Transverse colon (tissue), 4 donors: ENCODE measurements at regions of chr7 and their contacts with region 1.

Region 1: GRCh38 chr7:2354186-2354938 is at the start of gene EIF3B:
- DNase-seq: peak; percentile 91
- H3K4me3 ChIP-seq: peak within 1 kb of the TSS; percentile 87 to 100 (median 98)
- H3K27ac ChIP-seq: peak within 1 kb of the TSS; percentile 96 to 98 (median 96)
- H3K4me1 ChIP-seq: peaks cover 19 to 44% (median 32%) of the 10 kb centered on the region in 4 donors
- H3K27me3 ChIP-seq: no peaks in the 10 kb centered on the region
- CTCF ChIP-seq: peak in 2 of 5 experiments; percentile 5 to 15
- EP300 ChIP-seq: no peak
- POLR2A ChIP-seq: peak; percentile 28
- total RNA-seq, gene EIF3B: 75.4 to 201 (median 90.6) TPM

Region 2: GRCh38 chr7:2232766-2233520 is 121.4 kb before region 1 on chr7 and contains the start of gene MAD1L1:
- in situ Hi-C with region 1: loop called in 2 of 4 experiments (anchors 25 kb)
- intact Hi-C with region 1: no loop called
- DNase-seq: peak; percentile 93
- H3K4me3 ChIP-seq: peak within 1 kb of the TSS; percentile 88 to 99 (median 97)
- H3K27ac ChIP-seq: peak within 1 kb of the TSS; percentile 74 to 85 (median 78)
- H3K4me1 ChIP-seq: peaks cover 10 to 21% (median 20%) of the 10 kb centered on the region in 4 donors
- H3K27me3 ChIP-seq: no peaks in the 10 kb centered on the region
- CTCF ChIP-seq: no peak
- EP300 ChIP-seq: no peak
- POLR2A ChIP-seq: peak; percentile 31
- total RNA-seq, gene MAD1L1: 8.0 to 52.7 (median 26.7) TPM

Region 3: GRCh38 chr7:2241580-2242540 is 112.5 kb before region 1 on chr7 and contains the starts of genes MRM2 and NUDT1:
- in situ Hi-C with region 1: loop called in 3 of 4 experiments (anchors 10 to 25 kb)
- intact Hi-C with region 1: loop called (anchors 10 kb)
- DNase-seq: peak; percentile 87
- H3K4me3 ChIP-seq: peak within 1 kb of the TSS; percentile 50 to 100 (median 92)
- H3K27ac ChIP-seq: peak within 1 kb of the TSS; percentile 75 to 85 (median 82)
- H3K4me1 ChIP-seq: peaks cover 17 to 28% (median 22%) of the 10 kb centered on the region in 4 donors
- H3K27me3 ChIP-seq: no peaks in the 10 kb centered on the region
- CTCF ChIP-seq: no peak
- EP300 ChIP-seq: no peak
- POLR2A ChIP-seq: peak; percentile 66
- total RNA-seq, gene MRM2: 2.2 to 15.3 (median 12.7) TPM
- total RNA-seq, gene NUDT1: 4.2 to 23.6 (median 9.5) TPM in 3 of 4 donors, not detected in the other